H1 (cell line): ENCODE measurements at regions of chr13 and their contacts with region 1.

Region 1: GRCh38 chr13:30114571-30115256 is 192.6 kb downstream of the KATNAL1 start:
- DNase-seq: peak; percentile 80 to 99
- H3K4me3 ChIP-seq: peak overlapping the region; percentile 42 to 58 (median 54)
- H3K27ac ChIP-seq: 0 out of 2 replicates have a peak overlapping the region, but pooled peaks have one; percentile 25
- H3K4me1 ChIP-seq: peaks cover 0 to 13% (median 1%) of the 10 kb centered on the region in 4 experiments; a peak in 3 of 7 replicates
- H3K27me3 ChIP-seq: peaks cover 0 to 9% (median 3%) of the 10 kb centered on the region in 4 experiments; a peak in 4 of 7 replicates
- CTCF ChIP-seq: peak; percentile 71 to 94 (median 88)
- EP300 ChIP-seq: no peak
- POLR2A ChIP-seq: peak in 1 of 2 experiments; percentile 73; a peak in 2 of 3 replicates
- RAD21 ChIP-seq: peak; percentile 83 to 91

Region 2: GRCh38 chr13:29508130-29508875 is 606.4 kb before region 1 on chr13:
- CTCF ChIA-PET with region 1: interaction called, 10 read pairs
- POLR2A ChIA-PET with region 1: no interaction called
- DNase-seq: peak; percentile 70 to 91
- H3K4me3 ChIP-seq: no peak overlapping the region
- H3K27ac ChIP-seq: no peak overlapping the region
- H3K4me1 ChIP-seq: no peaks in the 10 kb centered on the region
- H3K27me3 ChIP-seq: no peaks in the 10 kb centered on the region
- CTCF ChIP-seq: peak in 2 of 3 experiments; percentile 81 to 98; a peak in 3 of 4 replicates
- EP300 ChIP-seq: no peak
- POLR2A ChIP-seq: 0 out of 3 replicates have a peak, but pooled peaks of 1 of the 2 experiments have one; percentile 32
- RAD21 ChIP-seq: peak; percentile 92 to 93

Region 3: GRCh38 chr13:29771247-29771646 is 343.5 kb before region 1 on chr13:
- CTCF ChIA-PET with region 1: interaction called, 44 read pairs
- POLR2A ChIA-PET with region 1: interaction called, 4 read pairs
- DNase-seq: no peak
- H3K4me3 ChIP-seq: no peak overlapping the region
- H3K27ac ChIP-seq: no peak overlapping the region
- H3K4me1 ChIP-seq: no peaks in the 10 kb centered on the region
- H3K27me3 ChIP-seq: no peaks in the 10 kb centered on the region
- CTCF ChIP-seq: peak in 1 of 3 experiments; percentile 15; a peak in 1 of 4 replicates
- EP300 ChIP-seq: no peak
- POLR2A ChIP-seq: no peak
- RAD21 ChIP-seq: peak in 1 of 2 experiments; percentile 56; a peak in 3 of 4 replicates

Region 4: DNA sequence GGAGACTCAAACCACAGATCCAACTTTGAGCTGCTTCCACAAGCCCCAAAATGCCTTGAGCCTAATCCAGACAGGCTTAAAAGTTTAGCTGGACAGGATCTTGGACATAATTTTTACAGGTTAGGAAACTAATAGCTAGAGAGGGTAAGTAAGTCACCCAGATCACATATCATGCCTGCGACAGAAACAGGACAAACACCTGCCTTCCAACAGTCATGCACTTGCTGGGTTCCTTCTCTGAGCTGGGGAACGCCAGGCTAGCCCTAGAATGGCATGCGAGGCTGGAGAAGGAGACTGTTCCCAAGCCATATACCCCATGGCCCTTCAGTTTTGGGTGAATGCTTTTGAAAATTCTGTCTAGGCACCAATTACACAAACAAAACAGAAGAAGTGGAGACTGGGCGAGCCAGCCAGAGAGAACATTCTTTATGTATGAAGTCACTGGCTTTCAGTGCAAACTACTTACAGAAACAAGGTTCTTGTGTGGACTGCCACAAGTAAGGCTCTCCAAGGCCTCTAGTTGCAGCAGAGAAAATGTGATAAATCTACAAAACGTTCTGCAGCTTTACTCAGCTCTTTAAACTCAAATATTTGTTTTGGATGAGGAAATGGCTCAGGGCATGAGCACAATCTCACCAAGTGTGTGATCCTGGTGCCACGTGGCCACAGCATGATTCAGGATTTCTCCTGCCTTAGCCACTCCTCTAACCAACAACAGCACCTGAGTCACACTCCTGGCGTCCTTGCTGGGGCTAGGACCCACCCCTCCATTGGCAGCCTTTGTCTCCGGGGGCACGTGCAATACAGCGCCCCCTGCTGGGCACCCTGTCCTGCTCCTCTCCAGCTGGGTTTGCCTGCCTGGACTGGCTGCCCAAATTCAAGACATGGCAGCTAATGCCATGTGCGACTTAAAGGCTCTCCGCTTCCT is 190.9 kb before region 1 on chr13:
- CTCF ChIA-PET with region 1: interaction called, 21 read pairs
- POLR2A ChIA-PET with region 1: no interaction called
- DNase-seq: peak; percentile 77 to 81
- H3K4me3 ChIP-seq: no peak overlapping the region
- H3K27ac ChIP-seq: no peak overlapping the region
- H3K4me1 ChIP-seq: peaks cover 0 to 5% (median 4%) of the 10 kb centered on the region in 4 experiments; a peak in 5 of 7 replicates
- H3K27me3 ChIP-seq: peaks cover 0 to 7% (median 3%) of the 10 kb centered on the region in 4 experiments; a peak in 3 of 7 replicates
- CTCF ChIP-seq: peak; percentile 77 to 86 (median 85)
- EP300 ChIP-seq: 0 out of 3 replicates have a peak, but pooled peaks of 1 of the 2 experiments have one; percentile 12
- POLR2A ChIP-seq: no peak
- RAD21 ChIP-seq: peak; percentile 66 to 81

Region 5: GRCh38 chr13:29954082-29955028 is 160.4 kb before region 1 on chr13:
- CTCF ChIA-PET with region 1: interaction called, 12 read pairs
- POLR2A ChIA-PET with region 1: no interaction called
- DNase-seq: no peak
- H3K4me3 ChIP-seq: no peak overlapping the region
- H3K27ac ChIP-seq: no peak overlapping the region
- H3K4me1 ChIP-seq: peaks cover 0 to 15% (median 5%) of the 10 kb centered on the region in 4 experiments; a peak in 4 of 7 replicates
- H3K27me3 ChIP-seq: no peaks in the 10 kb centered on the region
- CTCF ChIP-seq: no peak
- EP300 ChIP-seq: no peak
- POLR2A ChIP-seq: no peak
- RAD21 ChIP-seq: no peak

Region 6: GRCh38 chr13:30125422-30126073 is 10.8 kb after region 1 on chr13:
- CTCF ChIA-PET with region 1: interaction called, 38 read pairs
- POLR2A ChIA-PET with region 1: no interaction called
- DNase-seq: no peak
- H3K4me3 ChIP-seq: no peak overlapping the region
- H3K27ac ChIP-seq: no peak overlapping the region
- H3K4me1 ChIP-seq: no peaks in the 10 kb centered on the region
- H3K27me3 ChIP-seq: no peaks in the 10 kb centered on the region
- CTCF ChIP-seq: no peak
- EP300 ChIP-seq: no peak
- POLR2A ChIP-seq: no peak
- RAD21 ChIP-seq: no peak